ENCODE measurements at regions of chr6 and their contacts with region 1.

Region 1: DNA sequence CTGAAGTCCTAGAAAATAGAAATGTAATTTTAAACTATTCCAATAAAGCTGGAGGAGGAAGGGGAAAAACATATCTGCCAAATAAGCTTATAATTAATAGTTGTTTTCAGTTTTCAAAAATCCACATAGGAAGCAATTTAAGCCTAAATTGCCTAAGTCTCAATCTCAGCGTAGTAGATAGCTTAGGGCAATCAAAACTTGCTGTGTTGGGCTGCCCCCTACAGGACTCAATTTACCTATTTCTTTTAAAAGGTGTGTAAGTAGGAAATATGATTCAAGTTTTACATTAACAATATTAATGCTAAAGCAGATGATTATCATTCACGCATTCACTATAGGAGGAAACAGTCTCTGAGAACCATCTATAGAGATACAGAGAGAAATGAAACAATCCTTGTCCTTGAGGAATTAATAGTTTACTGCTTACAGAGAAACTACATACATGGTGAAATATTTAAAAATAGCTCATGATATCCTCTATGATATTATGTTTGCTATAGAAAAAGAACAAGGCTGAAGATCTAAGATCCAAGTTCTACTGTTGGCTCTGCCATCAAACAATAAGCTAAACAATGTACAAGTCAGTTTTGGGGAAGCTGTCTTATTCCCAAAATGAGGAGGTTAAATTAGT is 102.1 kb downstream of the ATG5 start:
- DNase-seq: peak; percentile 49 to 63
- H3K4me3 ChIP-seq: no peak overlapping the region
- H3K27ac ChIP-seq: 0 out of 2 replicates have a peak overlapping the region, but pooled peaks have one; percentile 9
- H3K4me1 ChIP-seq: 0 out of 2 replicates have a peak, but pooled peaks cover 3% of the 10 kb centered on the region
- H3K27me3 ChIP-seq: no peaks in the 10 kb centered on the region
- CTCF ChIP-seq: peak; percentile 93

Region 2: GRCh38 chr6:105179244-105180065 is 1044.0 kb before region 1 on chr6 and contains the start of gene POPDC3:
- CTCF ChIA-PET with region 1: interaction called, 11 read pairs
- POLR2A ChIA-PET with region 1: no interaction called
- intact Hi-C with region 1: no loop called
- DNase-seq: peak; percentile 49 to 64
- H3K4me3 ChIP-seq: peak within 1 kb of the TSS; percentile 86
- H3K27ac ChIP-seq: peak within 1 kb of the TSS; percentile 94
- H3K4me1 ChIP-seq: peaks cover 30% of the 10 kb centered on the region
- H3K27me3 ChIP-seq: no peaks in the 10 kb centered on the region
- CTCF ChIP-seq: no peak
- total RNA-seq, gene POPDC3: 14.8 and 24.2 TPM in 2 replicates

Region 3: DNA sequence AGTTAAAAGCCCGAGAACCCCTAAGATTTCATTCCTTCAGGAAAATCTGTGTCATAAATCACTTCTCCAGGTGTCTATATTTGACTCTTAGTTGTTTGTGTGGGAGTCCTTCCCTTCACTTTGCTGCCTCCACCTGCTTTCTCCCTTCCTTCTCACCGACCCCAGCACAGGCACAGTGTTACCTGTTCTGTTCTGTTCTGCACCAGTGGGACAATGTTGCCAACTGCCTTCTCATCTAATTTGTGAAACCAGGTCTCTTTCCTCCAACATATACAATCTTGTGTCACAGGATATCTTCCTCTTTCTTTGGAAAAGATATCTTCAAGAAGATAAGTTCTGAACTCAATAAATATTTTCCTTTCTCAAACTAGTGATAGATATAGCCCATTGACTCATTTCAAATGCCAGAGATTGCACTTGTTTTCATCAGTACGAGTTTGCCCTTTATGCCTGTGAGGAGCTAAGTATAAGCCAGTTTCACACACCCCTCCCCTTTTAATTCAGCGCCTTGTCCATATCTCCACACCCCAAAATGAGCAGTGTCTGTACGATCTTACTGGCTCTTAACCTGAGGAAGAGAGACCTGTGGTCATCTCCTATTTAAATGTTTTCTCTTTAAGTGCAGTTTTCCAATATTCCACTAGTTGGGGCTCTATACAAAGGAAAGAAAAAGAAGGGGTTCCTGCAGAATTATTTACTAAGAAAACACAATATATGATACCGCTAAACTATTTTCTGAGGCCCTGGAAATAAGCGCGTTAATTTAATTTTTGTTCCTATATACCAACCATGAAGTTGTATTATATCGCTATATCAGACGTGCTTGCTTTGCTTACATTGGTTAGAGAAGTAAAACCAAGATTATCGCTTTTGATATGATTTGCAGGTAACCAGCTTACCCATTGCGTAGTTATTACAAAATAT is 738.9 kb before region 1 on chr6:
- CTCF ChIA-PET with region 1: no interaction called
- POLR2A ChIA-PET with region 1: no interaction called
- intact Hi-C with region 1: loop called (anchors 1 kb)
- DNase-seq: peak in 1 of 2 experiments; percentile 53
- H3K4me3 ChIP-seq: no peak overlapping the region
- H3K27ac ChIP-seq: no peak overlapping the region
- H3K4me1 ChIP-seq: peaks cover 13% of the 10 kb centered on the region
- H3K27me3 ChIP-seq: no peaks in the 10 kb centered on the region
- CTCF ChIP-seq: peak; percentile 97

Region 4: GRCh38 chr6:105733565-105734162 is 489.8 kb before region 1 on chr6:
- CTCF ChIA-PET with region 1: no interaction called
- POLR2A ChIA-PET with region 1: no interaction called
- intact Hi-C with region 1: loop called (anchors 2 kb)
- DNase-seq: no peak
- H3K4me3 ChIP-seq: no peak overlapping the region
- H3K27ac ChIP-seq: no peak overlapping the region
- H3K4me1 ChIP-seq: no peaks in the 10 kb centered on the region
- H3K27me3 ChIP-seq: no peaks in the 10 kb centered on the region
- CTCF ChIP-seq: peak; percentile 92

Region 5: DNA sequence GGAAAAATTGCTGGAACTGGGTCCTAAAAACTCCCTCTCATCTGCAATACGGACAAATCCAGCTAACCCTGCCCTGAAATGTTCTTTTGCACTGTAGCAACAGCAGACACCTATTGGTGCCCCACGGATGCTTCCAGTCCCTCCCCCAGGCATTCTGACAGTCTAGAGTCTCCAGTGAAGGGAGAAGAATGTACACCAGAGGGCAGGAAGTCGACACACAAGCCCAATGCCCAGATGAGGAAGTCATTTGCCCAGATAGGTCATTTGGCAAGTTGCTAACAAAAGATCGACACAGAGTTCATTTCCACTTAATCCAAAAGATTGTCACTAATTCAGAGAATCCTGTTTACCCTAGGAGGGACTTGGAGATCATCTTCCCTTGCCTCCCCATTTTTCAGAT is 430.3 kb before region 1 on chr6:
- CTCF ChIA-PET with region 1: no interaction called
- POLR2A ChIA-PET with region 1: no interaction called
- intact Hi-C with region 1: loop called (anchors 10 kb)
- DNase-seq: peak; percentile 12 to 49
- H3K4me3 ChIP-seq: no peak overlapping the region
- H3K27ac ChIP-seq: peak overlapping the region; percentile 84
- H3K4me1 ChIP-seq: peaks cover 51% of the 10 kb centered on the region
- H3K27me3 ChIP-seq: no peaks in the 10 kb centered on the region
- CTCF ChIP-seq: no peak

Region 6: DNA sequence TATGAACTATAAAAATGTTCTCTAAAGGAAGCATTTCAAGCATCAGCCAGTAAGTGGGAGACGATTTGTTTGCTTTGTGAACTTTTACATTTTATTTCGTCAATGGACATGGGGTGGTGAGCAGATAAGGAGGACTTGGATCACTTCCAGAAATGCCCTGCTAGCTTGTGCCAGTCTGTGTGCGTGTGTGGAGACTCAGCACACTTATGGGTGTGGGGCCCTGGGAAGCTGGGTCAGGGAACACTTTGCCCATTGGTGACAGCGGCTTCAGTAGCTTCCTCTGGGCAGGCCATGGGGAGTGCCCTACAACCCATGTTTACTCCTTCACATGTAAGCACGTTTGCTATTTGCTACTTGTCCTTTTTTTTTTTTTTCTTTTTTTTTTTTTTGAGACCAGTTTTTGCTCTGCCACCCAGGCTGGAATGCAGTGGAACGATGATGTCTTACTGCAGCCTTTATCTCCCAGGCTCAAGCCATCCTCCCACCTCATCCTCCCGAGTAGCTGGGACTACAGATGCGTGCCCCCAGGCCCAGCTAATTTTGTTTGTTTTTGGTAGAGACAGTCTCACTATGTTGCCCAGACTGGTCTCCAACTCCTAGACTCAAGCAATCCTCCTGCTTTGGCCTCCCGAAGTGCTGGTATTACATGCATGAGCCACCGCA is 113.1 kb before region 1 on chr6:
- CTCF ChIA-PET with region 1: no interaction called
- POLR2A ChIA-PET with region 1: no interaction called
- intact Hi-C with region 1: no loop called
- DNase-seq: peak in 1 of 2 experiments; percentile 8
- H3K4me3 ChIP-seq: no peak overlapping the region
- H3K27ac ChIP-seq: no peak overlapping the region
- H3K4me1 ChIP-seq: no peaks in the 10 kb centered on the region
- H3K27me3 ChIP-seq: no peaks in the 10 kb centered on the region
- CTCF ChIP-seq: no peak

Region 7: GRCh38 chr6:106244931-106245330 is 21.5 kb after region 1 on chr6:
- CTCF ChIA-PET with region 1: no interaction called
- POLR2A ChIA-PET with region 1: no interaction called
- intact Hi-C with region 1: no loop called
- DNase-seq: no peak
- H3K4me3 ChIP-seq: no peak overlapping the region
- H3K27ac ChIP-seq: no peak overlapping the region
- H3K4me1 ChIP-seq: no peaks in the 10 kb centered on the region
- H3K27me3 ChIP-seq: no peaks in the 10 kb centered on the region
- CTCF ChIP-seq: no peak

Region 8: DNA sequence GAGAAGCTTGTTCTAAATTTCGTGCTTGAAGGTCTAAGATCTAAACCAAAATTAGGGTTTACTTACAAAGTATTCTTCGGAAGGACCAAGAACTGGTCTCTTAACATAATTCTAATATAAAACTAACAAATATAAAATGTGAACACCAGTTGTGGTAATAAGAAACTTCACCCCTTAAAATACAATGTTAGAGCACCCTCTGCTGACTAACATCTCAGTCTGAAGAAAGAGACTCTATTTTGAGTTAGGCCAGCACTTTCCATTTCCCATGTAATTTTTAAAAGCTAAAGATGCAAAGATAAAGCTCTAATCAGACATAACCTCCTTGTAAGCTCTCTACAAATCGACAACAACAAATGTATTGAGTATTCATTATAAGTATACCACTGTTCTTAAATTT is 77.5 kb after region 1 on chr6:
- CTCF ChIA-PET with region 1: no interaction called
- POLR2A ChIA-PET with region 1: no interaction called
- intact Hi-C with region 1: loop called (anchors 10 kb)
- DNase-seq: no peak
- H3K4me3 ChIP-seq: no peak overlapping the region
- H3K27ac ChIP-seq: no peak overlapping the region
- H3K4me1 ChIP-seq: no peaks in the 10 kb centered on the region
- H3K27me3 ChIP-seq: no peaks in the 10 kb centered on the region
- CTCF ChIP-seq: peak; percentile 75

Region 9: DNA sequence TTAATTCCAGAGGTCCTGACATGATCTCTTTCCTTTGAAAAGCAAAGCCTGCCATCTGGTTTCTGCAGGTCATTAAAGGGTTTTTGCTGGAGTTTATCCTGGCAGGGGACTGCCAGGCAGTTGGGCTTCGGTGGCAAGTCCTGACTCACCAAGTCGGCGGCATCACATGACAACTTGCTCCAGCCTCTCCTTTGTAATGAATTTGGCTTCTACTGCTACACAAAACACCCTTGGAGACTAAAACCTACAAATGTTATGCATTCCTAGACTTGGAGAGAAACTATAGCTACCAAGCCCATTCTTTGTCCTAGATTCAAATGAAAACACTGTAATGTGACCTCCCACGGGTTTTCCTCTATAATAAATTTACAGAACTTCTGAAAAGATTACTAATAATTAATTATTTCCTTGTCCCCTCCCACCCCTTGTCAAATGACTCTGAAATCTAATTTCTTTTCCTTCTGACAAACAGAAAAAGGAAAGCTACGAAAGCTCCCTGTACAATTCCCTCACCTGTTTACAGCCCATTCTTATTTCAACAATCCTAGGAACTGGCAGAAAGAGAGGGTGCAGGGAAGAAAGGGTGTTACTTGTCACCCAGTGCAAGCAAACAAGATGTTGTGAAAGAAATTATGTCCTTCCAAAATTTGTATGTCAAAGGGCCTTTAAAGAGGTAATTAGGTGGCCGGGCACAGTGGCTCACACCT is 468.9 kb after region 1 on chr6:
- CTCF ChIA-PET with region 1: no interaction called
- POLR2A ChIA-PET with region 1: no interaction called
- intact Hi-C with region 1: no loop called
- DNase-seq: peak; percentile 44 to 50
- H3K4me3 ChIP-seq: no peak overlapping the region
- H3K27ac ChIP-seq: peak overlapping the region; percentile 47
- H3K4me1 ChIP-seq: peaks cover 19% of the 10 kb centered on the region
- H3K27me3 ChIP-seq: no peaks in the 10 kb centered on the region
- CTCF ChIP-seq: no peak

Measured in PC-9 (cell line).